Calu3 (cell line): ENCODE measurements at regions of chr6 and their contacts with region 1.

Region 1: DNA sequence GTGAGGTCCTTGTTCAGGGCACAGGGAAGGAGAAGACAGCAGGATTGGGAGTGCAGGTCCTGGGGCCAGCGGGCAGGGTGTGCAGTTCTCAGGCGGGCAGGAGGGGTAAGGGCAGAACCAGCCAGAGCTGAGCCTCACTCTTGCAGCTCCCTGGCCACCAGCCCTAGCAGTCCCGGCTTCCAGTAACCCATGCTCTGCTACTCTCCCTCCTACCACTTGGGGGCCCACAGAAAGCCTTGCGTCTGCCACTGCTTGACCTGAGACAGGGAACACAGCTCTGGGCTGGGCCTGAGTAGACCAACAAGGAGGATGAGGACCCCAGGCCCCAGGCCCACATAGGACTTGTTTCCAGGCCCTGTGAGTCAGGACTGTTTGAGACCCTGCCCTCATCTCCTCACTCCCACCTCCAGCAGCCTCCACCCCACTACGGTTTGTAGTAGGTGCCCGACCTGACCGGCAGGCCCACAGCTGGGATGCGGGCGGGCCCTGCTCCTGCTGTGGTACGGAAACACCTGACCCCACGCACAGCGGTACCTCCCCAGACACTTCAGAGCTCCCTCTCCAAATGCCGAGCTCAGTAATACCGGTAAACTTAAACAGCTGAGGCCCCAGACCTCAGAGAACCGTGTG is 39.2 kb downstream of the KCNK5 start:
- DNase-seq: peak; percentile 67
- H3K4me3 Mint-ChIP-seq: no peak overlapping the region
- H3K27ac Mint-ChIP-seq: no peak overlapping the region
- H3K4me1 Mint-ChIP-seq: peaks cover 56% of the 10 kb centered on the region
- H3K27me3 Mint-ChIP-seq: no peaks in the 10 kb centered on the region
- CTCF ChIP-seq: peak; percentile 70

Region 2: DNA sequence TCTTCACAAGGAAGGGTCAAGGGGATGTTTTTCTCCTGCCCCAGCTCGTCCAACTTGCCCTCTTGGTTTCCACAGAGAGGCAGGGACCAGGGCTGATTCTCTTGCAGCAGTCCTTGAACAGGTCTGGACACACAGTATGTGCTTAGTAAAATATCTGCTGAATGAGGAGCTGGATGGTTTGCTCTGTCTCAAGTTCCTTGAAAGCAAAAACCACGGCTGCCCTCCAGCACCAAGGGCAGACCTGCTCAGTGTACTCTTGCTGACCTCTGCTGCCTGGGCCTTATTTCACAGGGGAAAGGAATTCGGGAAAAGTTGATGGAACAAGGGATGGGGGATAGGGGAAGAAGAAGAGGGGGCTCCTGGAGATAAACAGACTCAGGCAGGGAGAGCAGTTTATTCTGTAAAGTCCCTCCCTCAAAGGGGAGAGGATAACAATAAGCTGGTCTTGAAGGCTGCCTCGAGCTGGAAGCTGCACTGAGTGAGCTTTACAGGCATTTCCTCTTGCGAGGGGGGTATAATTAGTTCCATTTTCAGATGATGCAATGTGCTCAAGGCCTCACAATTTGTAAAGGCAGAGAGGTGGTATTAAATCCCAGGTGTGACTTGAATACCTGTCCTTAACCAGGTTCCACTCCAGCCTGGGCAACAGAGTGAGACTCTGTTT is 29.0 kb after region 1 on chr6:
- CTCF ChIA-PET with region 1: interaction called, 11 read pairs
- intact Hi-C with region 1: no loop called
- DNase-seq: no peak
- H3K4me3 Mint-ChIP-seq: peak overlapping the region; percentile 5
- H3K27ac Mint-ChIP-seq: peak overlapping the region; percentile 53
- H3K4me1 Mint-ChIP-seq: peaks cover 97% of the 10 kb centered on the region
- H3K27me3 Mint-ChIP-seq: no peaks in the 10 kb centered on the region
- CTCF ChIP-seq: no peak

Region 3: DNA sequence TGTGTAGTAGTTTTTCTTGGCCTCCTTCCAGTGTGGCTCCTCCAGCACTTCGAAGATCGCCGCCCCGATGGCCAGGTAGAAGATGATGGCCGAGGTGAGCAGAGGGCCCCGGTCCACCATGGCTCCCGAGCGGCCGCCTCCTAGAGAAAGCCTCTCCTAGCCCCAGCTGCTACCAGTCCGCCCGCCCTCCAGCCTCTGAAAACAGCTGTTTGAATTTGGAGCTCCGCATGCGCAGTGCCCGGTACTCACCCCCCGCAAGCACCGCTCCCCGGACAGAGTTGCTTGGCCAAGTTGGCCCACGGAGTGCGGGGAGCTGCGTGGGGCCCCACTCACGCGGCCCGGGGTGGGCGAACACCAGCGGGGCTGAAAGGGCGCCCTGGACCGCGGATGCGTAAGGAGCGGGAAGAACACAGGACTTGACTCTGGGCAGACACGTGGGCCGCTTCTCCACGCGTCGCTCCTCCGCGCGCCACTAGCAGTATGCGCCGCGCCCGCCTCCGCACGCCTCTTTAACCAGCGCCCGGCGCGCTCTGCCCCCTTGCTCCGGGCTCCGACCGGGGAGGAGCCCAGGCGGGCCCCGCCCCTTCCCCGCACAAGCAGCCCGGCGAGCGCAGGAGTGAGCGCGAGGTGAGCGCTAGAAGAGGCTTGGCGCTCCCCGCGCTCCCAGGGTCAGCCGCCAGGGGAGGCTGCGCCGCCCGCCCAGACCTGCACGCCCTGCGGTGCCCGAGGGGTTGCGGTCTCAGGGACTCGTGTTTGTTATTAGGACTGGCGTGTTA is 39.1 kb after region 1 on chr6 and contains the start of gene KCNK5:
- CTCF ChIA-PET with region 1: interaction called, 3 read pairs
- intact Hi-C with region 1: loop called (anchors 5 kb)
- DNase-seq: peak; percentile 96
- H3K4me3 Mint-ChIP-seq: peak within 1 kb of the TSS; percentile 69
- H3K27ac Mint-ChIP-seq: peak within 1 kb of the TSS; percentile 61
- H3K4me1 Mint-ChIP-seq: peaks cover 43% of the 10 kb centered on the region
- H3K27me3 Mint-ChIP-seq: no peaks in the 10 kb centered on the region
- CTCF ChIP-seq: peak; percentile 88
- total RNA-seq, gene KCNK5: 62.4 and 77.5 TPM in 2 replicates

Region 4: GRCh38 chr6:39280247-39280731 is 90.3 kb after region 1 on chr6:
- CTCF ChIA-PET with region 1: interaction called, 5 read pairs
- intact Hi-C with region 1: loop called (anchors 5 kb)
- DNase-seq: peak; percentile 86
- H3K4me3 Mint-ChIP-seq: peak overlapping the region; percentile 38
- H3K27ac Mint-ChIP-seq: peak overlapping the region; percentile 91
- H3K4me1 Mint-ChIP-seq: peaks cover 36% of the 10 kb centered on the region
- H3K27me3 Mint-ChIP-seq: no peaks in the 10 kb centered on the region
- CTCF ChIP-seq: no peak